Prostate gland (tissue), 2 donors: ENCODE measurements at regions of chrX and their contacts with region 1.

Region 1: GRCh38 chrX:47854474-47854873 is 17.8 kb downstream of the ZNF81 start:
- DNase-seq: peak; percentile 6
- H3K4me3 ChIP-seq: no peak overlapping the region
- H3K27ac ChIP-seq: no peak overlapping the region
- H3K4me1 ChIP-seq: no peaks in the 10 kb centered on the region
- H3K27me3 ChIP-seq: no peaks in the 10 kb centered on the region
- CTCF ChIP-seq: peak in 3 of 4 experiments; percentile 46 to 57 (median 54)
- POLR2A ChIP-seq: no peak

Region 2: DNA sequence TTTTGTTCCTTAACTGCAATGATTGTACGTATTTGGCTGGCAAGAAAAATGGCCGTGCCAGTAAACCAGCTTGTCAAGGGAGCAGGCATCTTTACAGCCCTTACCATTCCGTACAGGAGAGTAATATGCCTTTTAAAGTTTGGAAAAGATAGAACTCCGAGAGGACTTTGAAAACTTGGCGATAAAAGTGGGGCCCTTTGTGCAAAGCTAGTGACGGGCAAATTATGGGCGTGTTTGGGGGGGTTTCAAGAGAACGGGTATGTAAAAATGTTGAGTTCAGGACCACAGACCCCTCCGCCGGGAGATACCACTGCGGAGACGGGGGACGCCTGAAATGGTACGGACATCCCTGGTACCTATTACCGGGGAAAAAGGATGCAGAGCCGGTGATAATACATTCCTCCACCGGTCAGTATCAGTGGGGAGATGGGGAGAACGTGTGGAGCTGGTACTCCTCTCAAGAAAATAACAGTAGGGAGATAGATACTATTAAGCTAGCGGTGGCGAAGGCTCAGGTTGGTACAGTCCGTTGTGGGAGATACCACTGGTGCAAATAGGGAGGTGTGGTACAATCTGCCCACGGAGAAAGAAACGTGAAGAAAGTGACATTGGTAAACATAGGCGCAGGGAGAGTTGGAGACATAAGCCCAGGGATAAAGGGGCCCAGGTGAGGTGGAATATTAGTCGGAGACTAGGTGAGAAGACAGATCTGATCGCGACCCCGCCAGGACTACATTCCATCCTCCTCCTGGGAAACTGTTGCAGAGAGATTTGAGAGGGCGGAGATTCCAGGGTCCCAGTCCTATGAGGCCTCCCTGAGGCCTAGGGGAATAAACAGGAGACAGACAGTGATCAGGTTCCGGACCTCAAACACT is 166.8 kb after region 1 on chrX:
- intact Hi-C with region 1: loop called (anchors 2 kb)
- DNase-seq: peak; percentile 50
- H3K4me3 ChIP-seq: peak overlapping the region; percentile 31 to 39
- H3K27ac ChIP-seq: peak overlapping the region; percentile 84 to 87
- H3K4me1 ChIP-seq: no peaks in the 10 kb centered on the region
- H3K27me3 ChIP-seq: no peaks in the 10 kb centered on the region
- CTCF ChIP-seq: no peak
- POLR2A ChIP-seq: no peak